ENCODE measurements at regions of chr1 and their contacts with region 1.

Region 1: DNA sequence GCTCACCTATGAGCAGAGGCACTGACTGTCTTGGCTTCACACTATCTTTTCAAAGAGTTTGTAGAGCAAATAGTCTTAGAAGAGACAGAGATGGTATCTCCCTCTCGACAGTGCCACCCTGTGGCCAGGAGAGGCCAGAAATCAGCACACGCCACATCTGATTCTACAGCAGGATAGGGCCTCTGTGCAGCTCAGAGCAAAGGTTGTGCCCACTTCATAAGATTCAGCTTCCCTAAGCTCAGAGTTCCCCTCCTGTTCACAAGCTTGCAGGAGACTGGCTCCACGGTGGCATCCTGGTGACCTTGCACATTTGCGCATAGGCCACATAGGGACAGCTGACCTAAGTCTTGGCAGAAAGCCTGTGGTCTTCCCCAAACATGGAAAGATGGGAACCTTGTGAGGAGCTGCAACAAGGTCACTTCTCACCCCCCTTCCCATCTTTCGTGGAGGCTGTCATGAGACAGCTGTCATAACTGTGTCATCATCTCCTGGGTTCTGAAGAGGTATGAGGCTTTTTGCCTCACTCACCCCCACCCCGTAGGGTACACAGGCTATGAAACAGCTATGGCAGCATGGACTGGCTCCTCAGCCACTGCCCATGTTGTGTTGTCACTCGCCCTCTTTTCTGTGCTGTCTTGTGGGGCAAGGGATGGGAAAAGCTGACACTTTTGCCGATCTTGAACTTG is 3.0 kb downstream of the ITLN2 start:
- DNase-seq: peak; percentile 40
- ATAC-seq: peak; percentile 95
- H3K4me3 ChIP-seq: no peak overlapping the region
- H3K27ac ChIP-seq: no peak overlapping the region
- H3K4me1 ChIP-seq: no peaks in the 10 kb centered on the region
- H3K27me3 ChIP-seq: no peaks in the 10 kb centered on the region
- CTCF ChIP-seq: peak; percentile 80 to 90 (median 89)
- EP300 ChIP-seq: no peak
- POLR2A ChIP-seq: no peak
- RAD21 ChIP-seq: peak; percentile 89

Region 2: GRCh38 chr1:160675641-160676410 is 275.8 kb before region 1 on chr1:
- CTCF ChIA-PET with region 1: interaction called, 42 read pairs
- POLR2A ChIA-PET with region 1: no interaction called
- RAD21 ChIA-PET with region 1: interaction called, 11 read pairs
- SMC1A ChIA-PET with region 1: interaction called, 21 read pairs
- in situ Hi-C with region 1: loop called (anchors 5 kb)
- intact Hi-C with region 1: no loop called
- DNase-seq: peak; percentile 76
- ATAC-seq: peak; percentile 88
- H3K4me3 ChIP-seq: peak overlapping the region; percentile 2; the same call in 1 of the 2 replicates
- H3K27ac ChIP-seq: peak overlapping the region; percentile 62
- H3K4me1 ChIP-seq: peaks cover 48% of the 10 kb centered on the region
- H3K27me3 ChIP-seq: no peaks in the 10 kb centered on the region
- CTCF ChIP-seq: peak; percentile 86 to 95 (median 92)
- EP300 ChIP-seq: peak in 1 of 2 experiments; percentile 10; a peak in 1 of 4 replicates
- POLR2A ChIP-seq: peak; percentile 31; the same call in 1 of the 2 replicates
- RAD21 ChIP-seq: peak; percentile 87

Region 3: DNA sequence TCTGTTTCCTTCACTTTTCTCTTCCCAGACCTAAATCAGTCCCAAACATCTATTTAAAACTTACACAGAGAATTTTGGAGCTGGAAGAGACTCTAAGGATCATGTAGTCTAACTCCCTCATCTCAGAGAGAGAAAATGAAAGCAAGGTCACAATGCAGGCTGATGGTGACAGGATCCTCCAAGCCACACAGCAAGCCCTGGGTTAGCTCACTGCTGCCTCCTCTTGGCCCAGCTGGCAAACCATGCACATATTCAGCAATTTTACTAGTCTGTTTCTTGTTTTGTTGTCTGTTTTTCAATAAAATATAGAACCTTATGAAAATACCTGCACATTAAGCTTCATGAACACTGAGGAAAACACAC is 183.3 kb before region 1 on chr1:
- CTCF ChIA-PET with region 1: interaction called, 247 read pairs
- POLR2A ChIA-PET with region 1: interaction called, 5 read pairs
- RAD21 ChIA-PET with region 1: interaction called, 152 read pairs
- SMC1A ChIA-PET with region 1: interaction called, 30 read pairs
- in situ Hi-C with region 1: no loop called
- intact Hi-C with region 1: no loop called
- DNase-seq: peak; percentile 84
- ATAC-seq: peak; percentile 94
- H3K4me3 ChIP-seq: peak overlapping the region; percentile 59
- H3K27ac ChIP-seq: peak overlapping the region; percentile 89
- H3K4me1 ChIP-seq: peaks cover 23% of the 10 kb centered on the region
- H3K27me3 ChIP-seq: no peaks in the 10 kb centered on the region
- CTCF ChIP-seq: peak; percentile 90 to 97 (median 91)
- EP300 ChIP-seq: no peak
- POLR2A ChIP-seq: no peak; the same call in 1 of the 2 replicates
- RAD21 ChIP-seq: peak; percentile 96

Region 4: DNA sequence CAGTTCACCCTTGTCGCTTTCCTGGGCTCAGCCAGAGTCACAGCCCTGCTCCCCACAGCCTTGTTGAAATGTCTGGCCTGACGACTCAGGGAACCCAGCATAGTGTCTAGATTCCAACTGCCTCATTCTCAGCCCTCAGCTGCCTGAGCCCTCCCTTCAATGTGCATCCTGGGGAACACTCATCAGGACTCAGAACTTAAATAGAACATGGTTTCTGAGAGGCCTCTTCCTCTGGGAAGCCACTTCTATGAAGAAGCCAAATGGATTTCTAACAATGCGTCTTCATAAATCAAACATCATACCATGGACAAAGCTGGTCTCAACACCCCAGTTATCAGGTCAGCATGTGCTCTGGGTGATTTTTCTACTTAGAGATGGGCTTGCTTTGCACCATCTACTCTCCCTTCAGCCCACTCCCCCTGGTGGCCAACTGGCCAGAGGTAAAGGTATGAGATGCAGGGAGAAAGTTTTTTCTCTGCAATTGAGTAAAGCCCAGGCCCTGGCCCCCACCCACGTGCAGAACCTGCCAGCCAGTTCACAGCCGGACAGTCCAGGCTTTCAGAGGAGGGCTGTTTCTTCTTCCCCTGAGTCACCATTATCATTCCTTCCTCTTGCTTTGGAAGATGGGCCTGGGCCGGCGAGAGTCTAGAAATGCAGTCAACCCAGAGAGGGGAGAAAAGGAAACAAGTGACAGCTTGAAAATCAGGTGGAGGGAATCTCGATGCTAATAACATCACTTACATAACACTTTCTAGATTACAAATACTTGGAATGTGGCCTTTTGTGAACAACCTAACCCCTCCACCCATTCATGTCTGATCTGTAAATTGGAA is 121.0 kb before region 1 on chr1:
- CTCF ChIA-PET with region 1: interaction called, 349 read pairs
- POLR2A ChIA-PET with region 1: interaction called, 7 read pairs
- RAD21 ChIA-PET with region 1: interaction called, 174 read pairs
- SMC1A ChIA-PET with region 1: interaction called, 212 read pairs
- in situ Hi-C with region 1: loop called (anchors 5 kb)
- intact Hi-C with region 1: loop called (anchors 1 kb)
- DNase-seq: no peak
- ATAC-seq: peak; percentile 98
- H3K4me3 ChIP-seq: no peak overlapping the region
- H3K27ac ChIP-seq: no peak overlapping the region
- H3K4me1 ChIP-seq: no peaks in the 10 kb centered on the region
- H3K27me3 ChIP-seq: no peaks in the 10 kb centered on the region
- CTCF ChIP-seq: peak; percentile 67 to 87 (median 76)
- EP300 ChIP-seq: no peak
- POLR2A ChIP-seq: no peak
- RAD21 ChIP-seq: peak; percentile 84

Region 5: GRCh38 chr1:160862203-160863060 is 89.2 kb before region 1 on chr1 and contains the start of gene CD244:
- CTCF ChIA-PET with region 1: interaction called, 38 read pairs
- POLR2A ChIA-PET with region 1: no interaction called
- RAD21 ChIA-PET with region 1: interaction called, 14 read pairs
- SMC1A ChIA-PET with region 1: interaction called, 41 read pairs
- in situ Hi-C with region 1: no loop called
- intact Hi-C with region 1: no loop called
- DNase-seq: peak; percentile 71
- ATAC-seq: peak; percentile 96
- H3K4me3 ChIP-seq: peak within 1 kb of the TSS; percentile 32; the same call in 1 of the 2 replicates
- H3K27ac ChIP-seq: no peak within 1 kb of the TSS
- H3K4me1 ChIP-seq: peaks cover 15% of the 10 kb centered on the region
- H3K27me3 ChIP-seq: no peaks in the 10 kb centered on the region
- CTCF ChIP-seq: no peak
- EP300 ChIP-seq: peak in 1 of 2 experiments; percentile 60; a peak in 1 of 4 replicates
- POLR2A ChIP-seq: peak; percentile 56
- RAD21 ChIP-seq: no peak
- polyA plus RNA-seq, gene CD244: 0.24 to 0.37 TPM

Region 6: GRCh38 chr1:160963521-160963920 is 11.9 kb after region 1 on chr1:
- CTCF ChIA-PET with region 1: interaction called, 94 read pairs
- POLR2A ChIA-PET with region 1: no interaction called
- RAD21 ChIA-PET with region 1: no interaction called
- SMC1A ChIA-PET with region 1: interaction called, 12 read pairs
- in situ Hi-C with region 1: no loop called
- intact Hi-C with region 1: no loop called
- DNase-seq: no peak
- ATAC-seq: no peak
- H3K4me3 ChIP-seq: no peak overlapping the region
- H3K27ac ChIP-seq: no peak overlapping the region
- H3K4me1 ChIP-seq: no peaks in the 10 kb centered on the region
- H3K27me3 ChIP-seq: no peaks in the 10 kb centered on the region
- CTCF ChIP-seq: no peak
- EP300 ChIP-seq: no peak
- POLR2A ChIP-seq: no peak
- RAD21 ChIP-seq: no peak

Region 7: GRCh38 chr1:160997323-160998038 is 45.9 kb after region 1 on chr1:
- CTCF ChIA-PET with region 1: interaction called, 136 read pairs
- POLR2A ChIA-PET with region 1: interaction called, 3 read pairs
- RAD21 ChIA-PET with region 1: interaction called, 3 read pairs
- SMC1A ChIA-PET with region 1: interaction called, 9 read pairs
- in situ Hi-C with region 1: no loop called
- intact Hi-C with region 1: no loop called
- DNase-seq: no peak
- ATAC-seq: peak; percentile 93
- H3K4me3 ChIP-seq: no peak overlapping the region
- H3K27ac ChIP-seq: peak overlapping the region; percentile 33; the same call in 1 of the 2 replicates
- H3K4me1 ChIP-seq: peaks cover 3% of the 10 kb centered on the region; the same call in 1 of the 2 replicates
- H3K27me3 ChIP-seq: no peaks in the 10 kb centered on the region
- CTCF ChIP-seq: peak; percentile 65 to 80 (median 72)
- EP300 ChIP-seq: no peak
- POLR2A ChIP-seq: no peak
- RAD21 ChIP-seq: peak; percentile 85

Region 8: GRCh38 chr1:161082991-161083742 is 131.6 kb after region 1 on chr1:
- CTCF ChIA-PET with region 1: no interaction called
- POLR2A ChIA-PET with region 1: no interaction called
- RAD21 ChIA-PET with region 1: no interaction called
- SMC1A ChIA-PET with region 1: no interaction called
- in situ Hi-C with region 1: no loop called
- intact Hi-C with region 1: no loop called
- DNase-seq: no peak
- ATAC-seq: peak; percentile 55
- H3K4me3 ChIP-seq: no peak overlapping the region
- H3K27ac ChIP-seq: no peak overlapping the region
- H3K4me1 ChIP-seq: no peaks in the 10 kb centered on the region; the same call in 1 of the 2 replicates
- H3K27me3 ChIP-seq: no peaks in the 10 kb centered on the region
- CTCF ChIP-seq: no peak
- EP300 ChIP-seq: no peak
- POLR2A ChIP-seq: no peak
- RAD21 ChIP-seq: no peak

Region 9: GRCh38 chr1:161165742-161166668 is 214.4 kb after region 1 on chr1 and contains the start of gene PPOX:
- CTCF ChIA-PET with region 1: no interaction called
- POLR2A ChIA-PET with region 1: no interaction called
- RAD21 ChIA-PET with region 1: no interaction called
- SMC1A ChIA-PET with region 1: no interaction called
- in situ Hi-C with region 1: no loop called
- intact Hi-C with region 1: no loop called
- DNase-seq: peak; percentile 92
- ATAC-seq: peak; percentile 97
- H3K4me3 ChIP-seq: peak within 1 kb of the TSS; percentile 86
- H3K27ac ChIP-seq: peak within 1 kb of the TSS; percentile 54
- H3K4me1 ChIP-seq: peaks cover 8% of the 10 kb centered on the region
- H3K27me3 ChIP-seq: no peaks in the 10 kb centered on the region
- CTCF ChIP-seq: peak; percentile 50 to 67 (median 61)
- EP300 ChIP-seq: no peak; a peak in 1 of 4 replicates
- POLR2A ChIP-seq: peak; percentile 88
- RAD21 ChIP-seq: peak; percentile 26; the same call in 1 of the 2 replicates
- polyA plus RNA-seq, gene PPOX: 8.9 to 16.3 TPM

Region 10: GRCh38 chr1:161486806-161487741 is 535.5 kb after region 1 on chr1:
- CTCF ChIA-PET with region 1: no interaction called
- POLR2A ChIA-PET with region 1: no interaction called
- RAD21 ChIA-PET with region 1: no interaction called
- SMC1A ChIA-PET with region 1: no interaction called
- in situ Hi-C with region 1: no loop called
- intact Hi-C with region 1: no loop called
- DNase-seq: peak; percentile 23
- ATAC-seq: peak; percentile 88
- H3K4me3 ChIP-seq: no peak overlapping the region
- H3K27ac ChIP-seq: no peak overlapping the region
- H3K4me1 ChIP-seq: no peaks in the 10 kb centered on the region
- H3K27me3 ChIP-seq: no peaks in the 10 kb centered on the region
- CTCF ChIP-seq: peak; percentile 66 to 76 (median 76)
- EP300 ChIP-seq: no peak
- POLR2A ChIP-seq: no peak
- RAD21 ChIP-seq: peak; percentile 86